B cell (primary cell): ENCODE measurements at regions of chr10 and their contacts with region 1.

Region 1: DNA sequence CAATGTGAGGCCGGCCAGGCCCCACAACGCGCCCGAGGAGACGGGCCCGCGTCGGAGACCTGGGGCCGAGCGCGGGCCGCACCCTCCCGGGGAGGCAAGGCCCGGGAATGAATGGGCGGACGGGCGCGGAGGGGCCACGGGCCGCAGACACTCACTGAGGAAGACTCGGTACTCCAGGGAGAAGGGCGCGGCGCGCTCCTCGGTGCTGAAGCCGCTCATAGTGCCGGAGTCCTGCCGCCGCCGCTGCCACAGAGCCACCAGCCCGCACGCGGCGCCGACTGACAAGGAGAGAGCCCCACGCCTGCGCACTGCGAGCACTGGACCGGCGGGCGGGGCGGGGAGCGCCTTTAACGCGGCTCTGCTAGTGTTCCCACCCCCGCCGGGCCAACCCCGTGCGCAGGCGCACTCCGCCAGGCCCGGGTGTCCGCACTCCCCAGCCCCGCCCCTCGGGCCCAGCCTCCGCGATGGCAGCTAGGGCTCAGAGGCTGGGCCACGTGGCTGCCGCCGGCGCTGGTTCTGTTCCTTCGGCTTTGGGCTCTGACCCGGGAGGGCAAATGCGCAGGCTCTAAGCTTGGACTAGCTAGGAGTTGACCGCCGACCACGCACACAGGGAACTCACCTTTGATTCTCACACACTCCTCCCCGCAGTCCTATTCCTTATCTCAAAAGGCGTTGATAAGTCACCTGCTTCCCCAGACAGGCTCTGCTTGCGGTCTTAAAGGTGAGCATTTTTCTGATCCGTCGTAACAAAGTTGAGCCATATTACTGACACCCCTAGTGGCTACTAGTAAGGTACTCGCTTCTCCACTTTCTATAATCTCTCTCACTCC is at the start of gene PPA1:
- DNase-seq: peak; percentile 98
- ATAC-seq: peak; percentile 97
- H3K4me3 ChIP-seq: peak within 1 kb of the TSS; percentile 50 to 95 (median 87)
- H3K4me3 Mint-ChIP-seq: peak within 1 kb of the TSS; percentile 92
- H3K27ac ChIP-seq: peak within 1 kb of the TSS; percentile 75 to 77
- H3K27ac Mint-ChIP-seq: peak within 1 kb of the TSS; percentile 93
- H3K4me1 ChIP-seq: peaks cover 7 to 18% of the 10 kb centered on the region in 2 donors
- H3K4me1 Mint-ChIP-seq: peaks cover 13% of the 10 kb centered on the region
- H3K27me3 ChIP-seq: no peaks in the 10 kb centered on the region
- H3K27me3 Mint-ChIP-seq: no peaks in the 10 kb centered on the region
- CTCF ChIP-seq: peak; percentile 49
- total RNA-seq, gene PPA1: 39.4 and 40.6 TPM in 2 replicates

Region 2: DNA sequence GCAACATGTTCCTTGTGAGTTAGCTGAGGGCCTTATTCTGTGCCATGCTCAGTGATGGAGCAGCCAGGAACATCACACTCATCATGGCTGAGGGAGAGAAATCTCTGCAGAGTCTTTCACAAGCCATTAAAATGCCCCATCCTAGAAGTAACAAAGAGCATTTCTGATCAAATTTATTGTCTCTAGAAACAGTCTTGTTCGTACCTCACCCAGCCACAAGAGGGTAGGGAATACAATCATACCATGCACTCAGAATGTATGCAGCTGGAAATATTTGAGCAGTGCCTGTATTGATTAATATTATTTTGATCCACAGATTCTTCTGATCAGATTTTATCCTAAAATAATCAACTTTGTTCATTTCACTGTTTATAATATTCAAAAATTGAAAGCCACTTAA is 1092.0 kb before region 1 on chr10:
- CTCF ChIA-PET with region 1: no interaction called
- POLR2A ChIA-PET with region 1: no interaction called
- intact Hi-C with region 1: no loop called
- DNase-seq: no peak
- ATAC-seq: no peak
- H3K4me3 ChIP-seq: no peak overlapping the region
- H3K4me3 Mint-ChIP-seq: no peak overlapping the region
- H3K27ac ChIP-seq: no peak overlapping the region
- H3K27ac Mint-ChIP-seq: no peak overlapping the region
- H3K4me1 ChIP-seq: no peaks in the 10 kb centered on the region
- H3K4me1 Mint-ChIP-seq: peaks cover 16% of the 10 kb centered on the region
- H3K27me3 ChIP-seq: no peaks in the 10 kb centered on the region
- H3K27me3 Mint-ChIP-seq: no peaks in the 10 kb centered on the region
- CTCF ChIP-seq: no peak

Region 3: DNA sequence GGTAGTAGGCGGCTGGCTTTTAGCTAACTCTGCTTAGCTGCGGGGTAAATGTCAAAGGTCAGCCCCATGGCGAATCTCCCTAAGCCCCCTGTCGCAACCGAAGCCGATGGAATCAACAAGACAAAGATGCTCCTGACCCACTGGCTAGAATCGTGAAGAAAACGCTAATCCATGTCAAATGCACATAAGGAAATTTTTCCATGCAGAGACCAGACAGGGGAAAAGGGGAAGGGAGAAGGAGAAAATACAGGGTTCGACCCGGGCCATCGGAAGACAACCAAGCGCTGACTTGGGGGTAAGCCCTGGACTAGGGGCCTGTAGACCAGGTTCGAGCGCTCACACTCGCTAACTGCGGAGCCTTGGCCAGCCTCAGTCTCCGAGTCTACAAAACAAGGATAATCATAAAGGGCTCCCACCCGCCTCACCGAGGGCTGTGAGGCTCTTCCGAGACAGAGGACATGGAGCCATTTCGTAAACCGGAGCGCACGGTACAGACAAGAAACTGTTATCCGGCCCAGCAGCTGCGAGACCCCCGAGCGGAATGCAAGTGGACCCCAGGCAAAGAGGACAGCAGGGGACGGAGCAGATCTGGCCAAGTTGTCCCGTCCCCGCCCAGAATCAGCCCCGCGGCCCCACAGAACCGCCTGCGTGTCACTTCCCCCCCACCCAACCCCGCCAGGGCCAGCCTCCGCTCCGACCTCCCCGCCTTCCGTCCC is 63.5 kb before region 1 on chr10:
- CTCF ChIA-PET with region 1: no interaction called
- POLR2A ChIA-PET with region 1: interaction called, 5 read pairs
- intact Hi-C with region 1: loop called (anchors 1 kb)
- DNase-seq: no peak
- ATAC-seq: peak; percentile 18
- H3K4me3 ChIP-seq: peak overlapping the region; percentile 71 to 96 (median 86)
- H3K4me3 Mint-ChIP-seq: peak overlapping the region; percentile 91
- H3K27ac ChIP-seq: peak overlapping the region; percentile 80 to 93
- H3K27ac Mint-ChIP-seq: peak overlapping the region; percentile 94
- H3K4me1 ChIP-seq: peaks cover 21 to 27% of the 10 kb centered on the region in 2 donors
- H3K4me1 Mint-ChIP-seq: peaks cover 49% of the 10 kb centered on the region
- H3K27me3 ChIP-seq: no peaks in the 10 kb centered on the region
- H3K27me3 Mint-ChIP-seq: no peaks in the 10 kb centered on the region
- CTCF ChIP-seq: no peak

Region 4: GRCh38 chr10:70272925-70273316 is 39.6 kb after region 1 on chr10:
- CTCF ChIA-PET with region 1: interaction called, 4 read pairs
- POLR2A ChIA-PET with region 1: no interaction called
- intact Hi-C with region 1: loop called (anchors 1 kb)
- DNase-seq: peak; percentile 65
- ATAC-seq: peak; percentile 67
- H3K4me3 ChIP-seq: peak overlapping the region in 1 of 5 experiments; percentile 44
- H3K4me3 Mint-ChIP-seq: peak overlapping the region; percentile 54
- H3K27ac ChIP-seq: no peak overlapping the region
- H3K27ac Mint-ChIP-seq: peak overlapping the region; percentile 57
- H3K4me1 ChIP-seq: peaks cover 6 to 11% of the 10 kb centered on the region in 2 donors
- H3K4me1 Mint-ChIP-seq: peaks cover 15% of the 10 kb centered on the region
- H3K27me3 ChIP-seq: no peaks in the 10 kb centered on the region
- H3K27me3 Mint-ChIP-seq: no peaks in the 10 kb centered on the region
- CTCF ChIP-seq: peak; percentile 71

Region 5: DNA sequence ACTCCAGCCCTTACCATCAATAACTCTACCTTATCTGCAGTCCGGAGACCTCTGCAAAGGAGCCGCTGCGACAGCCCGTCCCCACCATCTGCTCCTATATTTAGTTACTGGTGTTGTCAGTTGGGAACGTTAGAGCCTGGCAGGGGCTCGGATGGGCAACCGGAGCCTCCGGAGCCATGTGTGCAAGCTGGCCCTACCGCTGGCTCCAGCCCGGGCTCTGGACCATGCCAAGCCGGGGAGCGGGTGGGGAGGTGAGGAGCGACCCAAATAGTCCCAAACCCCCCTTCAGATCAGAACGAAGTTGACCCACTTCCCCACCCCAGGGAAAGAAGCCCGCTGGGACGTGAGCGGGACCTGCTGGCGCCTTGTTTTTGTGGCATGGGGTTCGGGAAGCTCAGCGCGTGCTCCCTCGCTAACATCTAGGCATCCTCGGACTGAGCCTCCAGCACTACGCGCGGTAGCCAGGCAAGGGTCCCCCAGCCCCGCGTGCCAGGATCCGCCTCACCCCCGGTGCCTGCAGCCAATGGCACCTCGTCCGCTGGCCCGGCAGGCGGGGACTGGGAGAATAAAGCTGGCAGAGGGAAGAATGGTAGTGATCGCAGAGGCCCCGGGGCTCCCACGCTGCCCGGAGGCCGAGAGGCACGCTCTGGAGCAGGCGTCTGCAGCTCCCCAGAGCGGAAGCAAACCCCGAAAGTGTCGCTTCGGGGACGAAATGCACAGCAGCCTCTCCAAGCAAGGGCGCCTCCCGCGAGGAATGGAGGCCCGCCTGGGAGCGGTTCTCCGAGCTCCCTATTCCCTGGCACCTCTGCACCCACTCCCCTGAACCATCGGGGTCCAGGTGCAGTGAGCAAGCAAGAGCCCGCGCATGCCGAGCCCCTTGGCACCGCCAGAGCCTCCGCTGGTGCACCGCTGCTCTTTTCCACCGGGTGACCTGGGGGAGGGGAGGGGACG is 148.4 kb after region 1 on chr10:
- CTCF ChIA-PET with region 1: no interaction called
- POLR2A ChIA-PET with region 1: no interaction called
- intact Hi-C with region 1: loop called (anchors 5 kb)
- DNase-seq: no peak
- ATAC-seq: peak; percentile 8
- H3K4me3 ChIP-seq: peak overlapping the region; percentile 56 to 70 (median 64)
- H3K4me3 Mint-ChIP-seq: peak overlapping the region; percentile 90
- H3K27ac ChIP-seq: no peak overlapping the region
- H3K27ac Mint-ChIP-seq: peak overlapping the region; percentile 41
- H3K4me1 ChIP-seq: peaks cover 7 to 14% of the 10 kb centered on the region in 2 donors
- H3K4me1 Mint-ChIP-seq: peaks cover 12% of the 10 kb centered on the region
- H3K27me3 ChIP-seq: peaks cover 0 to 26% (median 3%) of the 10 kb centered on the region in 4 experiments
- H3K27me3 Mint-ChIP-seq: peaks cover 3% of the 10 kb centered on the region
- CTCF ChIP-seq: no peak

Region 6: DNA sequence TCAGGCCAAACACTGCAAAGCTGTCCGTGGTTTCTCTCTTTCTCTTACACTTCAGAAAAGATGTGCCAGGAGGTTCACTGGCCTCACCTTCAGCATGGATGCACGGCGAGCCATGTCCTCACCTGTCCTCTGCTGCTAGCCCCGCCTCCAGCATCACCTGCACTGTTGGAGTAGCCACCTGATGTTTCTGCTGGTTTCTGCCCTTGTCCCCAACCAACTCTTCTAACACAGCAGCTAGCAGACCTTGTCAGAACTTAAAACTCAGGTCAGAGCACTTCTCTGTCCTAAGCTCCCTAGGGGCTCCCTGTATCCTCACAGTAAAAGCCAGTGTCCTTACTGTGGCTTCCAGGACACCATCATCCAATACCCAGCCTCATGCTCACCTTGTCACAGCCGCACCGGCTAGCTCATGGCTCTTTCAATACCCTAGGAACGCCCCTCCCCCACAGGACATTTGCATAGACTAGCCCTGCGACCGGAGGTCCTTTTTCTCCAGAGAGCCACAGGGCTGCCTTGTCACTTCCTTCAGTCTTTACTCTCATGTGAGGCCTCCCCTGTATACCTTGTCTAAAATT is 260.4 kb after region 1 on chr10:
- CTCF ChIA-PET with region 1: no interaction called
- POLR2A ChIA-PET with region 1: no interaction called
- intact Hi-C with region 1: loop called (anchors 5 kb)
- DNase-seq: peak; percentile 78
- ATAC-seq: peak; percentile 73
- H3K4me3 ChIP-seq: peak overlapping the region in 3 of 5 experiments; percentile 13 to 57 (median 28)
- H3K4me3 Mint-ChIP-seq: peak overlapping the region; percentile 68
- H3K27ac ChIP-seq: peak overlapping the region; percentile 81 to 88
- H3K27ac Mint-ChIP-seq: peak overlapping the region; percentile 89
- H3K4me1 ChIP-seq: peaks cover 65 to 69% of the 10 kb centered on the region in 2 donors
- H3K4me1 Mint-ChIP-seq: peaks cover 76% of the 10 kb centered on the region
- H3K27me3 ChIP-seq: no peaks in the 10 kb centered on the region
- H3K27me3 Mint-ChIP-seq: no peaks in the 10 kb centered on the region
- CTCF ChIP-seq: no peak

Region 7: DNA sequence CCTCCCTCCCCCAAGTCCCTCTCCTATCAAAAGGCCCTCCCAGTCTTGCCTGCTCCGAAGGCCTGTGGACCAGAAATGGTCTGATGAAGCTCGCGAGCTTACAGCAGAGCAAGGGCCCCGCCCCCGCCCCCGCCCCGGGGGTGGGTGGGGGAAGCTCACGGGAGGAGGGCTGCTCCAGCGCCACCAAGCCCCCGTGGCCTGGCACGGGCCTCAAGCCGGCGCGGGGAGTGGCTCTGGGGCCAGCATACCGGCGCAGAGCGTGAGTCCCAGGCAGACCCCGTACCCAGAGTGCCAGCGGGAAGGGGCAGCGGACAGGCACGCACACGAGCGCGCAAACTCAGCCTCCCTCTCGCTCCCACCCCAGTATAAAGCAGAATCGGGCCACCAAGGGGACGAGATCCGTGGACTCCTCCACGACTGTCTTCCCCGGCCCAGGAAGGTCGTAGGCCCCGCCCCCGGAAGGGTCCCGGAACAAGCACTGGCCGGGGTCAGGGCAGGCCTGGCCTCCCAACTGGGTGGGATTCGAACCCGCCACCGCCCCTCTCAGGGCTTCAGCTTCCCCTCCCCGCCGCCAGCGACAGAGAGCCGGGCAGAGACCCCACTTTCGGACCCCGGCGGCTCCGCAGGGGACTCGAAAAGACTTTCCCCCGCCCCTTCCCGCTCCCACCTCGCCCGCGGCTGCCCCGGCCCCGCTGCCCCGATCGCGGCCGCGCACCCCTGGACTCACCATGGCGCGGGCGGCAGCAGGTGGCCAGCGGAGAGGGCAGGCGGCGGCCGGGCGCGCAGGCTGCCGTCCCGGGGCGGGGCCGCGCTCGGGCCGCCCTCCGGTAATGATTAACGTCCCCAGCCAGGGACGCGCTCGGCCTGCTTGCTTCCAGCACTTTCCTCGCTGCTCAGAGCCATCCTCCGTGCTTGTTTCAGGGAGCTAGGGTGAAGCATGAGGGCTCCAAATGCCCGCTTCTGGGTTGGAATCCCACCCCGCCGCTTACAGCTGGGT is 654.8 kb after region 1 on chr10 and contains the start of gene PCBD1:
- CTCF ChIA-PET with region 1: no interaction called
- POLR2A ChIA-PET with region 1: no interaction called
- intact Hi-C with region 1: loop called (anchors 5 kb)
- DNase-seq: peak; percentile 78
- ATAC-seq: peak; percentile 93
- H3K4me3 ChIP-seq: peak within 1 kb of the TSS; percentile 26 to 88 (median 76)
- H3K4me3 Mint-ChIP-seq: peak within 1 kb of the TSS; percentile 87
- H3K27ac ChIP-seq: peak within 1 kb of the TSS; percentile 63 to 84
- H3K27ac Mint-ChIP-seq: peak within 1 kb of the TSS; percentile 89
- H3K4me1 ChIP-seq: peaks cover 5 to 11% of the 10 kb centered on the region in 2 donors
- H3K4me1 Mint-ChIP-seq: peaks cover 5% of the 10 kb centered on the region
- H3K27me3 ChIP-seq: no peaks in the 10 kb centered on the region
- H3K27me3 Mint-ChIP-seq: no peaks in the 10 kb centered on the region
- CTCF ChIP-seq: no peak
- total RNA-seq, gene PCBD1: 13.3 and 14.1 TPM in 2 replicates